Ascending aorta (tissue), 2 donors: ENCODE measurements at regions of chr5 and their contacts with region 1.

Region 1: GRCh38 chr5:68252673-68253623 is 37.4 kb downstream of the PIK3R1 start:
- DNase-seq: peak in 1 of 2 donors; percentile 77
- H3K4me3 ChIP-seq: peak overlapping the region; percentile 17 to 37
- H3K27ac ChIP-seq: peak overlapping the region; percentile 66 to 77
- H3K4me1 ChIP-seq: peaks cover 15 to 85% of the 10 kb centered on the region in 2 donors
- H3K27me3 ChIP-seq: no peaks in the 10 kb centered on the region
- CTCF ChIP-seq: peak; percentile 69 to 84 (median 70)

Region 2: GRCh38 chr5:67246108-67246507 is 1006.8 kb before region 1 on chr5:
- intact Hi-C with region 1: loop called (anchors 1 kb)
- DNase-seq: no peak
- H3K4me3 ChIP-seq: no peak overlapping the region
- H3K27ac ChIP-seq: peak overlapping the region in 1 of 2 donors; percentile 75
- H3K4me1 ChIP-seq: peaks cover 11 to 18% of the 10 kb centered on the region in 2 donors
- H3K27me3 ChIP-seq: no peaks in the 10 kb centered on the region
- CTCF ChIP-seq: peak; percentile 59 to 79 (median 67)

Region 3: DNA sequence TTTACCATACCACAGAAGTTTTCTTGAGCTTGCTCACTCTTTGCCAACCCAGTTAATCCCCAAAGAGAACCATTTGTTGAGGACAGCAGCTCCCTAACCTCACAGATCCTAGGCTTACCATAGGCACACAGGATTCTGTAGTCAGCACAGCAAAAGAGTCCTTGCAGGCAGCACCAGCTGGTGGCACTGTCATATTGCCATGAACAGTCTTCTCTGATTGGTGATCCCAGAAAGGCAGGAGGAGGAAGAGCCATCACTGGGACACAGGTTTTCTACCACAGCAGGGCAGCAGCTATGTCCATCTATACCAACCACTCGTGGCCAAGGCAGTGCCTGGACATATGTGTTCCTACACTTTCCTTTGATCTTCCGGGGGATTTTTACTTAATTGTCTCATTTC is 759.3 kb before region 1 on chr5:
- intact Hi-C with region 1: loop called (anchors 10 kb)
- DNase-seq: no peak
- H3K4me3 ChIP-seq: no peak overlapping the region
- H3K27ac ChIP-seq: no peak overlapping the region
- H3K4me1 ChIP-seq: no peaks in the 10 kb centered on the region
- H3K27me3 ChIP-seq: no peaks in the 10 kb centered on the region
- CTCF ChIP-seq: peak in 2 of 3 experiments; percentile 12 to 36

Region 4: GRCh38 chr5:68027519-68027918 is 225.4 kb before region 1 on chr5:
- intact Hi-C with region 1: loop called (anchors 5 kb)
- DNase-seq: no peak
- H3K4me3 ChIP-seq: no peak overlapping the region
- H3K27ac ChIP-seq: peak overlapping the region; percentile 29 to 67
- H3K4me1 ChIP-seq: peaks cover 0 to 24% of the 10 kb centered on the region in 2 donors
- H3K27me3 ChIP-seq: no peaks in the 10 kb centered on the region
- CTCF ChIP-seq: no peak

Region 5: GRCh38 chr5:68369457-68370125 is 116.6 kb after region 1 on chr5:
- intact Hi-C with region 1: no loop called
- DNase-seq: no peak
- H3K4me3 ChIP-seq: no peak overlapping the region
- H3K27ac ChIP-seq: no peak overlapping the region
- H3K4me1 ChIP-seq: peaks cover 0 to under 1% of the 10 kb centered on the region in 2 donors
- H3K27me3 ChIP-seq: no peaks in the 10 kb centered on the region
- CTCF ChIP-seq: no peak